ENCODE measurements at regions of chr6 and their contacts with region 1.

Region 1: GRCh38 chr6:10722820-10723566 is at the start of gene TMEM14C:
- DNase-seq: peak; percentile 99
- H3K4me3 ChIP-seq: peak within 1 kb of the TSS; percentile 49 to 60
- H3K27ac ChIP-seq: peak within 1 kb of the TSS; percentile 80 to 91
- H3K4me1 ChIP-seq: peaks cover 8% of the 10 kb centered on the region
- H3K27me3 ChIP-seq: no peaks in the 10 kb centered on the region
- CTCF ChIP-seq: peak in 2 of 4 experiments; percentile 6 to 17
- POLR2A ChIP-seq: peak; percentile 92
- total RNA-seq, gene TMEM14C: 99.7 to 208 TPM

Region 2: DNA sequence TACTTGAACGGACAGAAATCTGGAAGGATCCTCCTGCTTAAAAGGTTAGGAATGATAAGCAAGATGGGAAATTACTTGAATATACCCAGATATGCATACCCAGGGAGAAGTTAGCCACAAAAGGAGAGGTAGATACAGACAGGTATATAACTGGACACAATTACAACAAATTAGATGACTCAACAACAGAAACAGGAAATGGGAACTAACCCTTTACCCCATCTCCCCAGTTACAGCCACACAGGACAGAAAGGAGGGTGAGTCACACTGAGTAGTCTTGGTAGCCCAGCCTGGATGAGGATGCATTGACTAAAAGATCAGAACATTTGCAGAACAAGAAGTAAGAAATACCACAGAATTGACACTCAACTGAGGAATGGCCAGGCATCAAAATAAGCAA is 89.8 kb before region 1 on chr6:
- intact Hi-C with region 1: no loop called
- DNase-seq: no peak
- H3K4me3 ChIP-seq: no peak overlapping the region
- H3K27ac ChIP-seq: no peak overlapping the region
- H3K4me1 ChIP-seq: no peaks in the 10 kb centered on the region
- H3K27me3 ChIP-seq: no peaks in the 10 kb centered on the region
- CTCF ChIP-seq: no peak
- POLR2A ChIP-seq: no peak

Region 3: GRCh38 chr6:10747251-10747972 is 24.4 kb after region 1 on chr6 and contains the start of gene TMEM14B:
- intact Hi-C with region 1: loop called (anchors 2 kb)
- DNase-seq: peak; percentile 100
- H3K4me3 ChIP-seq: peak within 1 kb of the TSS; percentile 55 to 64
- H3K27ac ChIP-seq: peak within 1 kb of the TSS; percentile 74 to 80
- H3K4me1 ChIP-seq: peaks cover 14% of the 10 kb centered on the region
- H3K27me3 ChIP-seq: no peaks in the 10 kb centered on the region
- CTCF ChIP-seq: peak in 2 of 4 experiments; percentile 13 to 21
- POLR2A ChIP-seq: peak; percentile 79
- total RNA-seq, gene TMEM14B: 81.1 to 165 TPM